Dorsolateral prefrontal cortex (tissue), 120 donors: ENCODE measurements at regions of chr2 and their contacts with region 1.

Region 1: GRCh38 chr2:188524519-188525113 is 232.9 kb downstream of the GULP1 start:
- DNase-seq: no peak
- H3K4me3 ChIP-seq: no peak overlapping the region
- H3K27ac ChIP-seq: no peak overlapping the region
- H3K27me3 ChIP-seq: no peaks in the 10 kb centered on the region
- CTCF ChIP-seq: peak; percentile 67 to 96 (median 82)

Region 2: GRCh38 chr2:188978291-188979081 is 453.9 kb after region 1 on chr2:
- intact Hi-C with region 1: loop called in 1 of 2 experiments (anchors 10 kb)
- DNase-seq: no peak
- H3K4me3 ChIP-seq: peak overlapping the region in 1 of 59 donors; percentile 45
- H3K27ac ChIP-seq: peak overlapping the region in 6 of 59 donors; percentile 4 to 50 (median 30)
- H3K27me3 ChIP-seq: no peaks in the 10 kb centered on the region
- CTCF ChIP-seq: peak in 50 of 56 donors; percentile 9 to 62 (median 37)

Region 3: DNA sequence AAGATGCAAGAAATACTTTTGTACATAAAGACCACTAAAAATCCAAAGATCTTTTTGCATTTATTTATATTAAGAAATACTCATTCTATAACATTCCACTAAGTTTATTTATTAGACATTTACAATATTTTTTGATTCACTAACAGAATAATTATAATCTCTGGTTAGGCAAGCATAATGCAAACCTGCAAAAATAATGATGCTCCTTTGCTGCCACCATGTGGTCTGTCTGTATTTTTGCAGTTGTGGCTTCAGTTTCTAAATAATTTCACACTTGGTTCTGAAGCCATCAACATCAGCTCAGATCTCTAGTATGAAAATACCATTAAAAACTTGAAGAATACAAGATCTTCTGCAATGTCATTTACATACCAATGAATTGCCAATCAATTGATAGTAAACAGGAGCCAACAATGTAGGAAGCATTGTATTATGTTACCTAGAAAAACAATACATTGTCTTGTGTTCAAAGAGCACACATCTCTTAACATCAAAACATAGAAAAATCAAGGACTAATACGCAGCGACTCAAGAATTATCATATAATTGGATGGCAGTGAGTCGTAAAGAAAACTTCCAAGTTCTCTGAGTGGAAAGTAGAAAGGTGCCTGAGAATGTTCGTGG is 887.8 kb after region 1 on chr2:
- intact Hi-C with region 1: loop called (anchors 5 kb)
- DNase-seq: peak in 2 of 10 donors; percentile 8 to 9
- H3K4me3 ChIP-seq: no peak overlapping the region
- H3K27ac ChIP-seq: peak overlapping the region in 3 of 59 donors; percentile 8 to 32 (median 31)
- H3K27me3 ChIP-seq: no peaks in the 10 kb centered on the region
- CTCF ChIP-seq: peak; percentile 68 to 97 (median 84)